ENCODE measurements at regions of chr19 and their contacts with region 1.

Region 1: GRCh38 chr19:13784731-13785452 is 10.4 kb upstream of the ZSWIM4 start:
- DNase-seq: peak; percentile 75 to 79
- H3K4me3 ChIP-seq: no peak overlapping the region
- H3K27ac ChIP-seq: no peak overlapping the region
- H3K4me1 ChIP-seq: peaks cover 0 to 29% of the 10 kb centered on the region in 2 donors
- H3K27me3 ChIP-seq: no peaks in the 10 kb centered on the region
- CTCF ChIP-seq: peak; percentile 18 to 73 (median 62)
- POLR2A ChIP-seq: no peak

Region 2: DNA sequence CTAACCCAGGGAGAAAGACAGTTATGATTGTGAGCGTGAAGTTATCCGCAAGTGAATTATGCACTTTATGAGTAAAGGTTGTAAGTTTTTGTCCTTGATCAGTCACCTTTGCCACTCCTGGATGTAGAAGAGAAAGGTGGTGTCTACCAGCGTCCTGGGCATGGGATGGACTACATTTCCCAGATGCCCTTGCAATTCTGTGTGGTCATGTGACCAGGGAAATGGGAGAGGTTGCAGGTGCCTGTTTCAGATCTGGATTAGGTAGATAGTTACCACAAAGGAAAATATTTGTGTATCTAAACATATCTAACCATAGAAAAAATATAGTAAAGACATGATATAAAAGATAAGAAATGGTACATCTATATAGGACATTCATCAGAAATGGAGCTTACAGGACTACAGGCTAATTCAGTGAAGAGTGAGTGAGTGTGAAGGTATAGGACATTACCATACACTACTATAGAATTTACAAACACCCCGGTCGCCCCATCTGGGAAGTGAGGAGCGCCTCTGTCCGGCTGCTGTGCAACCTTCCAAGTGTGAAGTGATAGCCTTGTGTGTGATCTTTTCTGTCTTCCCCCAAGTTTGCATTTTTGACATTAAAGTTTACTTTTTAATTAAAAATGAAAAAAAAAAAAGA is 227.0 kb before region 1 on chr19:
- intact Hi-C with region 1: no loop called
- DNase-seq: no peak
- H3K4me3 ChIP-seq: no peak overlapping the region
- H3K27ac ChIP-seq: no peak overlapping the region
- H3K4me1 ChIP-seq: no peaks in the 10 kb centered on the region
- H3K27me3 ChIP-seq: no peaks in the 10 kb centered on the region
- CTCF ChIP-seq: no peak
- POLR2A ChIP-seq: no peak

Region 3: GRCh38 chr19:13861732-13862531 is 77.0 kb after region 1 on chr19:
- intact Hi-C with region 1: loop called (anchors 2 kb)
- DNase-seq: peak; percentile 94 to 95
- H3K4me3 ChIP-seq: peak overlapping the region in 1 of 3 donors; percentile 20
- H3K27ac ChIP-seq: peak overlapping the region; percentile 75 to 92 (median 89)
- H3K4me1 ChIP-seq: peaks cover 5 to 22% of the 10 kb centered on the region in 2 donors
- H3K27me3 ChIP-seq: no peaks in the 10 kb centered on the region
- CTCF ChIP-seq: peak; percentile 94 to 99 (median 98)
- POLR2A ChIP-seq: peak in 1 of 2 donors; percentile 77